Heart left ventricle (tissue), 16 donors: ENCODE measurements at regions of chr6 and their contacts with region 1.

Region 1: GRCh38 chr6:8006208-8006607 is 58.0 kb downstream of the BLOC1S5 start:
- DNase-seq: no peak
- ATAC-seq: peak in 2 of 4 donors; percentile 60 to 73
- H3K4me3 ChIP-seq: no peak overlapping the region
- H3K27ac ChIP-seq: no peak overlapping the region
- H3K4me1 ChIP-seq: peaks cover 0 to 3% (median 0%) of the 10 kb centered on the region in 12 donors
- H3K27me3 ChIP-seq: no peaks in the 10 kb centered on the region
- CTCF ChIP-seq: peak; percentile 27 to 65 (median 56)
- POLR2A ChIP-seq: no peak

Region 2: GRCh38 chr6:7899101-7899888 is 106.9 kb before region 1 on chr6:
- intact Hi-C with region 1: loop called in 2 of 10 experiments (anchors 5 kb)
- DNase-seq: no peak
- ATAC-seq: peak in 2 of 4 donors; percentile 13 to 17
- H3K4me3 ChIP-seq: no peak overlapping the region
- H3K27ac ChIP-seq: no peak overlapping the region
- H3K4me1 ChIP-seq: peaks cover 0 to 11% (median under 1%) of the 10 kb centered on the region in 12 donors
- H3K27me3 ChIP-seq: no peaks in the 10 kb centered on the region
- CTCF ChIP-seq: peak in 2 of 12 donors; percentile 6 to 14
- POLR2A ChIP-seq: no peak